Right lobe of liver (tissue), 6 donors: ENCODE measurements at regions of chr1 and their contacts with region 1.

Region 1: DNA sequence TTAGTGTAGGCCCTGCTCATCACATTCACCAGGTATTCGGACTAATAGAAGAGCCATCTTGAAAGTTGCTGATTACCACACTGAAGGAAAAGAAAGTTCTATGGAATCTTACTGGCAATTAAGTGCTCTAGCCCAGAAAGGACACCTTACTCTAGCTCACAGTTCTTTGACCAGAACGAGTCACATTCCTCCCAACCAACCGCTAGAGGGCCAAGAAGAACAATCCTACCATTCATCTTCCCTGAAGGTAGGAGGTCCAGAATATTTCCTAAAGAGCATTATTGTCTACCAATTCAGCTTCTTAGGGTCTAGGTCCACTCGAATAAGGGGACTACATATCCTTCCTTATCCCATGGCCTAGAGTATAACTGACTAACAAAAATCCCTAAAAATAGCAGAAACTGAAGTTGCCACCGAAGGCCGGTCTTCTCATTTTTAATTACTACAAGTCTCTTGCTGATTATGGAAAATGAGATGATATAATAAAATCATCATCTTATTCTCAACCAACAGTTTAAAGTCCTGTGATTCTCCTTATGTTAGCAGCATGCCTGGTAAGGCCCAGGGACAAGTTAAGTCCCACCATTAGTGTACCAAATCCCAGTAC is 2.7 kb upstream of the FMO1 start:
- DNase-seq: peak in 1 of 3 donors; percentile 57
- ATAC-seq: peak; percentile 90 to 93 (median 93)
- H3K4me3 ChIP-seq: no peak overlapping the region
- H3K27ac ChIP-seq: no peak overlapping the region
- H3K4me1 ChIP-seq: peaks cover 0 to 4% (median 0%) of the 10 kb centered on the region in 4 donors
- H3K27me3 ChIP-seq: no peaks in the 10 kb centered on the region
- CTCF ChIP-seq: peak; percentile 71 to 75 (median 72)
- POLR2A ChIP-seq: no peak

Region 2: DNA sequence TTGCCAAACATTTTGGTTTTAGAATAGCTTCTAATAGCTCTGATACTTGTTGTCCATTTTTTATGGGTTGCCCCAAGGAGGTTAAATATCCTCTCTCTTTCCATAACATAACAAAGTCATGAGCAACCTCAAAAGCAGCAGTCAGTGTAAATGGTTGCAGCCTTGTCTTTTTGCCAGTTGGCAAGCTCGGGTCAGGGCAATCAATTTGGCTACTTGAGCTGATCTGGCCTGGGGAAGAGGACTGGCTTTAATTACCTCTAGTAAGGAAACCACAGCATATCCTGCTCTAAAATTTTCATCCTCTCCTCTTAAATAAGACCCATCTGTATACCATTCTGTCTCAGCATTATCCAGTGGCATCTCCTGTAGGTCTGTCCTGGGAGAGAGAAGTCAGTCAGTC is 47.2 kb after region 1 on chr1:
- intact Hi-C with region 1: loop called in 1 of 2 experiments (anchors 10 kb)
- DNase-seq: peak in 2 of 3 donors; percentile 22 to 64
- ATAC-seq: peak; percentile 54 to 81 (median 67)
- H3K4me3 ChIP-seq: no peak overlapping the region
- H3K27ac ChIP-seq: no peak overlapping the region
- H3K4me1 ChIP-seq: peaks cover 0 to 6% (median 0%) of the 10 kb centered on the region in 4 donors
- H3K27me3 ChIP-seq: no peaks in the 10 kb centered on the region
- CTCF ChIP-seq: no peak
- POLR2A ChIP-seq: no peak

Region 3: GRCh38 chr1:171344473-171344820 is 98.9 kb after region 1 on chr1:
- intact Hi-C with region 1: no loop called
- DNase-seq: peak in 1 of 3 donors; percentile 75
- ATAC-seq: peak; percentile 70 to 80 (median 70)
- H3K4me3 ChIP-seq: peak overlapping the region in 2 of 3 donors; percentile 30 to 38
- H3K27ac ChIP-seq: peak overlapping the region; percentile 67 to 85 (median 80)
- H3K4me1 ChIP-seq: peaks cover 0 to 31% (median 13%) of the 10 kb centered on the region in 4 donors
- H3K27me3 ChIP-seq: no peaks in the 10 kb centered on the region
- CTCF ChIP-seq: no peak
- POLR2A ChIP-seq: no peak